CD4-positive, alpha-beta T cell (primary cell): ENCODE measurements at regions of chr17 and their contacts with region 1.

Region 1: GRCh38 chr17:1532836-1533602 is 16.6 kb upstream of the INPP5K start:
- DNase-seq: peak in 13 of 14 experiments; percentile 29 to 78 (median 48)
- ATAC-seq: peak; percentile 97
- H3K4me3 ChIP-seq: no peak overlapping the region
- H3K4me3 Mint-ChIP-seq: no peak overlapping the region
- H3K27ac ChIP-seq: peak overlapping the region in 1 of 2 donors; percentile 0
- H3K27ac Mint-ChIP-seq: no peak overlapping the region
- H3K4me1 ChIP-seq: no peaks in the 10 kb centered on the region
- H3K4me1 Mint-ChIP-seq: no peaks in the 10 kb centered on the region
- H3K27me3 ChIP-seq: no peaks in the 10 kb centered on the region
- H3K27me3 Mint-ChIP-seq: no peaks in the 10 kb centered on the region
- CTCF ChIP-seq: peak; percentile 17

Region 2: DNA sequence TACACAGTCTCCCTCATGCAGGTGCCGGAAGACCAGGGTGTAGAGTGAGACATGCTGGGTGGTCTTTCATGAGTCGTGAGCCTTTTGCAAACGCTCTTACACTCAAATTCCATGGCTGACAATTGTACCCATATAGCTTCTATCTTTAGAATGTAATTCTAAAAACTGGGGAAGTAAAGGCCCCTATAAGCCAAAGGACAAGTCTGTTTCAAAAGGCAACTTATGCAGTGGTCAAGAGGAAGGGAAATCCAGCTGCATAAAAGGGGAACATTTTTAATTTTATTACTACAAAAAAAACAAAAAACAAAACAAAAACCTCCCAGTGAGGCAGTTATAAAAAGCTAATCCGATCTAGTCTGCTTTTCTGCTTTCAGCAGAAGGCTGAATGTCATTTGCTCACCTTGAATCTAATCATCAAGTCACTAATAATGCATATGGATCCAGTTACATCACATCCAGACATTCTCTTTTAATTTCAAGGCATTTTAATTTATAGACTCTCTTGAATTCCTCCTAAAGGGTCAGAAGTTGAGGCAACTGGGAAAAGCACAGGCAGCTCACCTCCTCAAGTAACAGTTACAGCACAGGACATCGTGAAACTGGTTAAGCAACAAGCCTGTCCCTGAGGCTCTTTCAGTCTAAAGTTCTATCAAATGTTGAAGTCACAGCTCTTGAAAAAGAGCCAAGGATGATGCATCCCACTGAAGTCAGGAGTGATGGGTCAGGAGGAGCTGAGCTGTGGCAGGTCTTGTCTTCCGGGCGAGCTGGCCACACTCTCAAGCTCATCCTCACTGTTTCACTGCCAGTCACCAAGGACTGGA is 918.2 kb before region 1 on chr17:
- CTCF ChIA-PET with region 1: no interaction called
- POLR2A ChIA-PET with region 1: no interaction called
- intact Hi-C with region 1: no loop called
- DNase-seq: peak in 2 of 14 experiments; percentile 39 to 56
- ATAC-seq: no peak
- H3K4me3 ChIP-seq: no peak overlapping the region
- H3K4me3 Mint-ChIP-seq: no peak overlapping the region
- H3K27ac ChIP-seq: no peak overlapping the region
- H3K27ac Mint-ChIP-seq: no peak overlapping the region
- H3K4me1 ChIP-seq: no peaks in the 10 kb centered on the region
- H3K4me1 Mint-ChIP-seq: no peaks in the 10 kb centered on the region
- H3K27me3 ChIP-seq: no peaks in the 10 kb centered on the region
- H3K27me3 Mint-ChIP-seq: no peaks in the 10 kb centered on the region
- CTCF ChIP-seq: no peak

Region 3: GRCh38 chr17:1260086-1260769 is 272.8 kb before region 1 on chr17:
- CTCF ChIA-PET with region 1: no interaction called
- POLR2A ChIA-PET with region 1: no interaction called
- intact Hi-C with region 1: loop called (anchors 5 kb)
- DNase-seq: no peak
- ATAC-seq: no peak
- H3K4me3 ChIP-seq: peak overlapping the region; percentile 53
- H3K4me3 Mint-ChIP-seq: peak overlapping the region; percentile 30
- H3K27ac ChIP-seq: no peak overlapping the region
- H3K27ac Mint-ChIP-seq: no peak overlapping the region
- H3K4me1 ChIP-seq: peaks cover 31% of the 10 kb centered on the region
- H3K4me1 Mint-ChIP-seq: peaks cover 27% of the 10 kb centered on the region
- H3K27me3 ChIP-seq: peaks cover 14 to 21% of the 10 kb centered on the region in 2 experiments
- H3K27me3 Mint-ChIP-seq: peaks cover 32% of the 10 kb centered on the region
- CTCF ChIP-seq: no peak

Region 4: DNA sequence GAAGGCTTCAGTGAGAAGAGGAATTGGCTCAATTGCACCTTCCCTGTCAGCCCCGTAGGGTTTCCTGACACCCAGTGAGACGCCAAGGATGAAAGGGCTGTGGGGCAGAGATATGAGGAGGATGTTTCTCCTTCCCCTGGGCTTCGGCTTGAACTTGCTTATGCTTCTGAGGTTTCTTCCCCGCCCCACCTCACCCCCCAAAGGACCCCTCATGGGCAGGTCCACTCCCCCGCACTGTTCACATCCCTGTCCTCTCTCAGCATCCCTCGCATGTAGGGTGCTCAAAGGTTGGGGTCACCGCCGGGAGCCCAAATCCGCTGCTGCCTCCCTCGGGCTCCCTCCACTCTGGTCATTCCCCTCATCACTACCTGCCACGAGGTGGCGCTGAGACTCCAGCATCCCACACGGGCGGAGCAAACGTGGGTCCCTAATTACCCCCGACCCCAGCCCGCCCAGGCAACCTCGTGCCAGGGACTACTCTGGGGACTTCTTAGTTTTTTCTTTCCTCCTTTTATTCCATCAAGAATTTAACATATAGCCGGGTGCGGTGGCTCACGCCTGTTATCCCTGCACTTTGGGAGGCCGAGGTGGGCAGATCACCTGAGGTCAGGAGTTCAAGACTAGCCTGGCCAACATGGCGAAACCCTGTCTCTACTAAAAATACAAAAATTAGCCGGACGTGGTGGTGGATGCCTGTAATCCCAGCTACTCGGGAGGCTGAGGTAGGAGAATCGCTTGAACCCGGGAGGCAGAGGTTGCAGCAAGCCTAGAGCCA is 256.9 kb before region 1 on chr17:
- CTCF ChIA-PET with region 1: no interaction called
- POLR2A ChIA-PET with region 1: no interaction called
- intact Hi-C with region 1: loop called in 1 of 2 experiments (anchors 2 kb)
- DNase-seq: peak; percentile 58 to 86 (median 70)
- ATAC-seq: peak; percentile 76
- H3K4me3 ChIP-seq: no peak overlapping the region
- H3K4me3 Mint-ChIP-seq: no peak overlapping the region
- H3K27ac ChIP-seq: no peak overlapping the region
- H3K27ac Mint-ChIP-seq: no peak overlapping the region
- H3K4me1 ChIP-seq: peaks cover 8% of the 10 kb centered on the region
- H3K4me1 Mint-ChIP-seq: no peaks in the 10 kb centered on the region
- H3K27me3 ChIP-seq: peaks cover 13 to 15% of the 10 kb centered on the region in 2 experiments
- H3K27me3 Mint-ChIP-seq: peaks cover 35% of the 10 kb centered on the region
- CTCF ChIP-seq: peak; percentile 85

Region 5: GRCh38 chr17:1509290-1509881 is 23.6 kb before region 1 on chr17:
- CTCF ChIA-PET with region 1: no interaction called
- POLR2A ChIA-PET with region 1: no interaction called
- intact Hi-C with region 1: no loop called
- DNase-seq: no peak
- ATAC-seq: no peak
- H3K4me3 ChIP-seq: no peak overlapping the region
- H3K4me3 Mint-ChIP-seq: no peak overlapping the region
- H3K27ac ChIP-seq: no peak overlapping the region
- H3K27ac Mint-ChIP-seq: no peak overlapping the region
- H3K4me1 ChIP-seq: peaks cover 16% of the 10 kb centered on the region
- H3K4me1 Mint-ChIP-seq: peaks cover 15% of the 10 kb centered on the region
- H3K27me3 ChIP-seq: no peaks in the 10 kb centered on the region
- H3K27me3 Mint-ChIP-seq: no peaks in the 10 kb centered on the region
- CTCF ChIP-seq: no peak